Mammary epithelial cell (primary cell): ENCODE measurements at regions of chr7 and their contacts with region 1.

Region 1: GRCh38 chr7:81499262-81500116 is 270.4 kb downstream of the HGF start:
- DNase-seq: peak; percentile 52
- H3K4me3 ChIP-seq: no peak overlapping the region
- H3K27ac ChIP-seq: no peak overlapping the region
- H3K4me1 ChIP-seq: peaks cover 3% of the 10 kb centered on the region
- H3K27me3 ChIP-seq: no peaks in the 10 kb centered on the region
- CTCF ChIP-seq: peak; percentile 56 to 62

Region 2: GRCh38 chr7:81659697-81660395 is 160.4 kb after region 1 on chr7:
- CTCF ChIA-PET with region 1: no interaction called
- dilution Hi-C with region 1: no loop called
- in situ Hi-C with region 1: no loop called
- intact Hi-C with region 1: no loop called
- DNase-seq: no peak
- H3K4me3 ChIP-seq: no peak overlapping the region
- H3K27ac ChIP-seq: no peak overlapping the region
- H3K4me1 ChIP-seq: peaks cover 6% of the 10 kb centered on the region
- H3K27me3 ChIP-seq: no peaks in the 10 kb centered on the region
- CTCF ChIP-seq: no peak

Region 3: GRCh38 chr7:81704595-81704994 is 205.1 kb after region 1 on chr7:
- CTCF ChIA-PET with region 1: no interaction called
- dilution Hi-C with region 1: no loop called
- in situ Hi-C with region 1: loop called (anchors 5 to 10 kb)
- intact Hi-C with region 1: no loop called
- DNase-seq: no peak
- H3K4me3 ChIP-seq: no peak overlapping the region
- H3K27ac ChIP-seq: no peak overlapping the region
- H3K4me1 ChIP-seq: no peaks in the 10 kb centered on the region
- H3K27me3 ChIP-seq: no peaks in the 10 kb centered on the region
- CTCF ChIP-seq: no peak

Region 4: DNA sequence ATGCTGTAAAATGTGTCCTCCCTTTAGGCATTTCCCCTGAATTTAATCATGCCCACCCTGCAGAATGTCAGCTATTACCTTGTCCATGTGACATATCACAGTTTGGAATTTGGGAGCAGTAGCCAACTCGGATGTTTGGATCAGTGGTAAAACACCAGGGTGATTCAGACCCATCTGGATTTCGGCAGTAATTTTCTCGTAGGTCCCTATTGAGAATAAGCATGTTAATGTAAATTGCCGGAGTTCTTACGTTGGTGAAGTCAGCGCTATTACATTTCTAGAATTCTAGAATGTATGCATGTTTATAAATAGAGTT is 226.3 kb after region 1 on chr7:
- CTCF ChIA-PET with region 1: no interaction called
- dilution Hi-C with region 1: loop called (anchors 25 kb)
- in situ Hi-C with region 1: no loop called
- intact Hi-C with region 1: no loop called
- DNase-seq: no peak
- H3K4me3 ChIP-seq: no peak overlapping the region
- H3K27ac ChIP-seq: no peak overlapping the region
- H3K4me1 ChIP-seq: no peaks in the 10 kb centered on the region
- H3K27me3 ChIP-seq: peaks cover 2% of the 10 kb centered on the region
- CTCF ChIP-seq: no peak

Region 5: GRCh38 chr7:81956520-81956919 is 457.0 kb after region 1 on chr7:
- CTCF ChIA-PET with region 1: no interaction called
- dilution Hi-C with region 1: no loop called
- in situ Hi-C with region 1: no loop called
- intact Hi-C with region 1: loop called (anchors 1 kb)
- DNase-seq: no peak
- H3K4me3 ChIP-seq: no peak overlapping the region
- H3K27ac ChIP-seq: no peak overlapping the region
- H3K4me1 ChIP-seq: no peaks in the 10 kb centered on the region
- H3K27me3 ChIP-seq: no peaks in the 10 kb centered on the region
- CTCF ChIP-seq: peak; percentile 10 to 34

Region 6: DNA sequence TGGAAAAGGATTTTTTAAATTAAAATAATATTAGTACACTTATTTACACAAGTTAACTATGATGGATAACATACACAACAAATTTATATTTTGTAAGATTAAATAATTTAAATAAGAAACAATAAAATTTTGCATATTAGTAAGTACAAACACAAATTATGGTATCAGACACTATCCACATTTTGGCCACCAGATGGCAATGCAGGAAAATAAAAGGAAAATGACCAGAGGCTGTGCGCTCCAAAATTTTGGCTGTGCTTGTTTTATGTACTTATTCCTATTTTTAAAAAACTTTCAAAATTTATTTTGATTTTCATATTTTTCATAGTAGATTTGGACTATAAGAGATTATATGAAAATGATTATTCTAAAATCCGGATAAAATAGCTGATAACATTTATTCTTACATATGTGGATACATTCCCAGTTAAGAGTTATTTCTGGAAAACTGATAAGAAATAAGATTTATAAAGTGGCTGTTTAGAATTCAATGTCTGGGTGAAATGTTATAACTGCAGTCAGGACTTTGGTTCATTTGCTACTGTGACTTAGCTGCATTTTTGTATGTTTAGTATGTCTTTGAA is 545.1 kb after region 1 on chr7:
- CTCF ChIA-PET with region 1: interaction called, 4 read pairs
- dilution Hi-C with region 1: no loop called
- in situ Hi-C with region 1: loop called in 1 of 2 experiments (anchors 25 kb)
- intact Hi-C with region 1: no loop called
- DNase-seq: peak; percentile 29
- H3K4me3 ChIP-seq: no peak overlapping the region
- H3K27ac ChIP-seq: no peak overlapping the region
- H3K4me1 ChIP-seq: peaks cover 4% of the 10 kb centered on the region
- H3K27me3 ChIP-seq: no peaks in the 10 kb centered on the region
- CTCF ChIP-seq: peak; percentile 48 to 61

Region 7: GRCh38 chr7:82578430-82578829 is 1078.9 kb after region 1 on chr7:
- CTCF ChIA-PET with region 1: no interaction called
- dilution Hi-C with region 1: no loop called
- in situ Hi-C with region 1: loop called (anchors 25 kb)
- intact Hi-C with region 1: loop called (anchors 10 kb)
- DNase-seq: peak; percentile 10
- H3K4me3 ChIP-seq: no peak overlapping the region
- H3K27ac ChIP-seq: no peak overlapping the region
- H3K4me1 ChIP-seq: no peaks in the 10 kb centered on the region
- H3K27me3 ChIP-seq: no peaks in the 10 kb centered on the region
- CTCF ChIP-seq: no peak

Region 8: DNA sequence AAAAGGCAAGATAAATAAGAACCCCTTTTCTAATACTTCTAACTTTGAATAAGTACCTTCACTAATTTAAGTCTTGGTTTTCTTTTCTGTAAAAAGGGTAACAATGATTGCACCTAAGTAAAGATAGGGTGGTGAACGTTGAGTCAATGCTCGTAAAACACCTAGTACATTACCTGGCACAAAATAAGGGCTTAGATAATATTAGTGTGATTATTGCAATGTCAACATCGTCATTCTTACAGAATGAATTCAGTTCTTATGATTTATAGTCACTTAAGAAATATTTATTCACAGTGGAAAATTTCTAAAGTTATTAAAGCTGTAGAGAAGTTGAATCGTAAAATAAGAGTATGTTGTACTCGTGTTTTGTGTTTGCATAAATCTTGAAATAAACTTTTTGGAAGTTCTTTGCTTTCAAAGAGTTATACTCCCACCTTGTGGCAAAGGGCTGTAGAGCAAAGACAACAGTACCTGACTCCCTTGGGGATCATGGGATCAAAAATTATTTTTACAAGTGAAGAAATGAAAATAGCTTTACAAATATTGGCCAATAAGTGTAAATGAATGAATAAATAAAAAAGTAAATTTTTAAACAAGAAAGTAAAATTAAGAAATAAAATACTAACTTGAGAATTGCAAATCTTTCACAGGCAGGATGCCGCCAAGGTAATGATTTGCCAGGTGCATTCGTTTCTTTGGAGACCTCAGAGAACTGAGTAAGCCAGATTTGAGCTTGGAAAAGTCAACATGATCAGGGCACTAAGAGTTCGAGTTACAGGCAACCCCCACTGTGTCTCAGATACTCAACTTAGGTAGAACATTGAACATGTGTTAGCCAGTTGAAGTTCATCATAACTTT is 1229.9 kb after region 1 on chr7:
- CTCF ChIA-PET with region 1: no interaction called
- dilution Hi-C with region 1: no loop called
- in situ Hi-C with region 1: loop called in 1 of 2 experiments (anchors 25 kb)
- intact Hi-C with region 1: loop called (anchors 5 kb)
- DNase-seq: peak; percentile 22
- H3K4me3 ChIP-seq: no peak overlapping the region
- H3K27ac ChIP-seq: no peak overlapping the region
- H3K4me1 ChIP-seq: no peaks in the 10 kb centered on the region
- H3K27me3 ChIP-seq: no peaks in the 10 kb centered on the region
- CTCF ChIP-seq: peak; percentile 67 to 82